Activated CD8-positive, alpha-beta memory T cell treated with anti-CD3 and anti-CD28 coated beads, Interleukin-2, amount 10 ng/mL, durations not matched to agents 7 days and 5 days (primary cell): ENCODE measurements at regions of chr10 and their contacts with region 1.

Region 1: GRCh38 chr10:6563075-6563474 is 17.0 kb downstream of the PRKCQ start:
- DNase-seq: peak; percentile 76
- ATAC-seq: peak; percentile 74
- H3K4me3 Mint-ChIP-seq: peak overlapping the region; percentile 53
- H3K27ac Mint-ChIP-seq: peak overlapping the region; percentile 79
- H3K4me1 Mint-ChIP-seq: peaks cover 84% of the 10 kb centered on the region
- H3K27me3 Mint-ChIP-seq: no peaks in the 10 kb centered on the region

Region 2: DNA sequence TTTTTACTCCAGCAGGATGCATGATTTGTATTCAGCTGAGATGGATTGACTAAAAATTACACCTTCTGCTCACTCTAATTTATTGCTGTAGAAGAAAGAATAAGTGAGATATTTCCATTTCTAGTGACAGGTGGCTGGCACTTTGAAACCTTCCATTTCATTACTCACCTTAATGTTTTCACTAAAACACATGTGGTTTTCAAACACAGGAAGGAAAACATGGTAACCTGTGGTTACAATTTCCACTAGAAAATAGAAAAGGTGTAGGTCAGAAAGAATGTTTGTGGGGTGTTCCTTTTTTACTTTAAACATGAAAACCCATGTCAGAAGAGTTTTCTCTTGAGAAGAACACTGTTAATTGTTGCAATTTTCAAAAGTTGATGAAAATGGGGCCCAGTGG is 29.0 kb after region 1 on chr10:
- CTCF ChIA-PET with region 1: no interaction called
- DNase-seq: no peak
- ATAC-seq: peak; percentile 67
- H3K4me3 Mint-ChIP-seq: peak overlapping the region; percentile 30
- H3K27ac Mint-ChIP-seq: peak overlapping the region; percentile 91
- H3K4me1 Mint-ChIP-seq: peaks cover 64% of the 10 kb centered on the region
- H3K27me3 Mint-ChIP-seq: no peaks in the 10 kb centered on the region

Region 3: DNA sequence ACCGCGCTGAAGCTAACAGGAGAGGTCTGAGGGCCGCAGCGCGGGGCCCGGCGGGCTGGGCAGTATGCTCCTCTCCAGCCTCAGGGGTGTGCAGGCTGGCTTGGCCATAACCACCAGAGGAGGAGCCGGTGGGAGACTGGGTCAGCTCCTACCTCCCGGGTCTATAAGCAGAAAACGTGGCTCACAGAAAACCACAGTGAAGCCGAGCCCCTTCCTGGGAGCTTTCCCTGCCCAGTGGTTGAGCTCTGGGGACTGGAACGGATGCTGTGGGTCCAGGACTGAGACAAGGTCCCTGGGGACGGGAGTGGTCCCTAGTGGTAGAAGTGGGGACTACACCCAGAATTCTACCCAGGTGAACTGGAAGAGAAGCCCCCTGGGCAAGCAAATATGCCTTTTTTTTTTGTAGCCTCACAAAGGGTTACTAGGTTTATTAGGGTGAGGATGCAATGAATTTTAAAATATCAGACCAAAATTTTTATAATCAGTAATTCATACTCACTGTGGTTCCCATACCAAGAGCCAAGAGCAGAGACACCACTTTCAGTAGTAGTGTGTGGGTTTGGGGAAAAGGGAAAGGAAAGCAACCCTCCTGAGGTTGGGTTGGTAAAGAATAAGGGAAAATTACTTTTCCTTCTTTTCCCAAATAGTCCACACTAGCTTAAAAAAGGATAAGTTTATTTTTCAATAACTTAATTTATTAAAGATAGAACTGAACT is 84.9 kb after region 1 on chr10:
- CTCF ChIA-PET with region 1: interaction called, 12 read pairs
- DNase-seq: peak; percentile 85
- ATAC-seq: peak; percentile 87
- H3K4me3 Mint-ChIP-seq: no peak overlapping the region
- H3K27ac Mint-ChIP-seq: no peak overlapping the region
- H3K4me1 Mint-ChIP-seq: peaks cover 43% of the 10 kb centered on the region
- H3K27me3 Mint-ChIP-seq: no peaks in the 10 kb centered on the region